IMR-90 (cell line): ENCODE measurements at regions of chr20 and their contacts with region 1.

Region 1: DNA sequence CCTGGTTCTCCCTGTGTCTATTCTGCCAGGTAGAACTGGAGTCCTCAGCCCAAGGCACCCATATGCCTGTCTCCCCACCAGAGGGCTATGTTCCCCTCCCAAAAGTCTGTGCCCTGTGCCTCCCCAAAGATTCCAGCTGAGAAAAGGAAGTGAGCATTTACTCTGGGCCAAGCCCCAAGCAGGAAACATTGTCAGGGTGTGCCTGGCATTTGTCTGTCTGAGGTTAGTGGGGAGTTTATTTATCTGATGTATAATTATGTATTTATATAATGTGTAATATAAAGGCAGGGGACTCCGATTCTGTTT is 5.6 kb downstream of the GDF5 start:
- DNase-seq: no peak
- ATAC-seq: no peak
- H3K4me3 ChIP-seq: no peak overlapping the region
- H3K27ac ChIP-seq: no peak overlapping the region
- H3K4me1 ChIP-seq: peaks cover 6% of the 10 kb centered on the region; the same call in 1 of the 2 replicates
- H3K27me3 ChIP-seq: no peaks in the 10 kb centered on the region
- CTCF ChIP-seq: no peak
- POLR2A ChIP-seq: no peak
- RAD21 ChIP-seq: no peak

Region 2: GRCh38 chr20:34834459-34834893 is 597.9 kb before region 1 on chr20:
- CTCF ChIA-PET with region 1: no interaction called
- POLR2A ChIA-PET with region 1: no interaction called
- dilution Hi-C with region 1: no loop called
- in situ Hi-C with region 1: loop called (anchors 25 kb)
- intact Hi-C with region 1: loop called (anchors 10 kb)
- DNase-seq: peak; percentile 45
- ATAC-seq: peak; percentile 80
- H3K4me3 ChIP-seq: no peak overlapping the region
- H3K27ac ChIP-seq: no peak overlapping the region
- H3K4me1 ChIP-seq: no peaks in the 10 kb centered on the region; the same call in 1 of the 2 replicates
- H3K27me3 ChIP-seq: peaks cover 15% of the 10 kb centered on the region
- CTCF ChIP-seq: peak; percentile 45
- POLR2A ChIP-seq: no peak
- RAD21 ChIP-seq: peak; percentile 60

Region 3: DNA sequence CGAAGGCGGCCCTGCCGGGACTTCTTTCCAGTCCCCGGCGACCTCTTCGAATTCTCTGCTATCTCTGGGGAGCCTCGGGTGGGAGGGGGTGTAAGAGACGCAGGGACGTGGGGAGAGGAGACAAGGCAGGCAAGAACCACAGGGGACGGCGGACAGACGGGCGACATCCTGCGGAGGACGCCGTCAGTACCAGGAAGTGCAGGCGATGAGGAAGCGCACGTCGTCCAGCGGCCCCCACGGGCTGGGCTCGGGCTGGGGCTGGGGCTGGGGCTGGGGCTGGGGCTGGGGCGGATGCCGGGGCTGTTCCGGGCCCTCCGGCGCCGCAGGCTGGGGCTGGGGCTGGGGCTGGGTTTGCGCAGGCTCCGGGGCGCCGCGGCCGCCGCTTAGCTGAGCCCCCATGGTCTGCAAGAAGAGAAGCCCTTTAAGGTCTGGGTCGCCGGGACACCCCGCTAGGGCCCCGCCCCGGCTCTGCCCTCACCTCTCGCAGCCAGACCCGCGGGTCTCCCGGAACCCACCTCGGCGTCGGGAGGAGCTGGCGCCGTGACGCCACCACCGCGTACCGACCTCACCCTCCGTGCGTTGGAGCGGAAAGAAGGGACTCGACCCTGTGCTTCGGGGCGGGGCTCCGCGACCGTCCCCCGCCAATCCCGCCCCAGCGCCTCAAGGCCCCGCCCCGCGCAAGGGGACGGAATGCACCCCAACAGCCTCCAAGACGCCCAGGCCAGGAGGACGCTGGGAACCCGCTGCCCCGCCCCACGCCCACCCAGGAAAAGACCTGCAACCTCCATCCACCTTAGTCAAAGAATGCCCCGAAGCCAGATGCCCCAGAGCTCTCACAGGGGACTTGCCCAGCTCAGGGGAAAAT is 154.6 kb before region 1 on chr20 and contains the start of gene MMP24OS:
- CTCF ChIA-PET with region 1: no interaction called
- POLR2A ChIA-PET with region 1: no interaction called
- dilution Hi-C with region 1: no loop called
- in situ Hi-C with region 1: no loop called
- intact Hi-C with region 1: loop called (anchors 10 kb)
- DNase-seq: peak; percentile 82
- ATAC-seq: peak; percentile 94
- H3K4me3 ChIP-seq: peak within 1 kb of the TSS; percentile 62
- H3K27ac ChIP-seq: peak within 1 kb of the TSS; percentile 97
- H3K4me1 ChIP-seq: peaks cover 6% of the 10 kb centered on the region
- H3K27me3 ChIP-seq: no peaks in the 10 kb centered on the region
- CTCF ChIP-seq: peak; percentile 34; the same call in 1 of the 2 replicates
- POLR2A ChIP-seq: peak; percentile 91
- RAD21 ChIP-seq: peak; percentile 37
- total RNA-seq, gene MMP24OS: 5.9 and 7.2 TPM in 2 replicates

Region 4: DNA sequence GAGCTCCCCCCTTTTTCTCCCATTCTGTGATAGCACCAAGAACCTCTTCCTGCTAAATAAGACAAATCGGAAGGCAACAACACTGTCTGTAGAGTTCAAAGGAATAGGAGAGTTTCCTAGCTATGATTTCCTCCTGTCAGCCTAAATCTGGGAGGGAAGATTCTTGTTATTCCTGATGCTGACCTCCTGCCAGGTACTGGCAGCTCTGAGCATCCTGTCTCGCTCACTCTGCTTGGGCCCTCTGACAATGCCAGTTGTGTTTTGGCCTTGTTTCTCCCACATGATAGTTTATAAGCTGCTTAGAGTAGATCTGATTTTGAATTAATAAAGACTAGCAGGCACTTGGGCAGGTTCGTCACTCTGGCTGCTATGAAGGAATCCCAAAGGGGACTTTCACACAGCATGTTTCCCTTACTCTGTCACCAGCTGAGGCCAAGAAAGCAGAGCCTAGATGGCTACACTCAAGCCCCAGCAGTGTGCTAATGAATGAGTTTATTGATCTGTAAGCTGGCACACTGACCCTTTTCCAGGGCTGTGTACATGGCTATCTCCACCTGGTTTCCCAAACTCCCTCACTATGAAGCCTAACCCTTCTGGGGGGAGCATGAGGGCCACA is 72.9 kb before region 1 on chr20:
- CTCF ChIA-PET with region 1: no interaction called
- POLR2A ChIA-PET with region 1: no interaction called
- dilution Hi-C with region 1: no loop called
- in situ Hi-C with region 1: no loop called
- intact Hi-C with region 1: loop called (anchors 10 kb)
- DNase-seq: no peak
- ATAC-seq: no peak
- H3K4me3 ChIP-seq: no peak overlapping the region
- H3K27ac ChIP-seq: no peak overlapping the region
- H3K4me1 ChIP-seq: peaks cover 5% of the 10 kb centered on the region; the same call in 1 of the 2 replicates
- H3K27me3 ChIP-seq: no peaks in the 10 kb centered on the region
- CTCF ChIP-seq: no peak
- POLR2A ChIP-seq: no peak
- RAD21 ChIP-seq: no peak

Region 5: GRCh38 chr20:35410613-35411012 is 21.8 kb before region 1 on chr20:
- CTCF ChIA-PET with region 1: no interaction called
- POLR2A ChIA-PET with region 1: interaction called, 15 read pairs
- dilution Hi-C with region 1: no loop called
- in situ Hi-C with region 1: no loop called
- intact Hi-C with region 1: no loop called
- DNase-seq: no peak
- ATAC-seq: no peak
- H3K4me3 ChIP-seq: peak overlapping the region; percentile 82; the same call in 1 of the 2 replicates
- H3K27ac ChIP-seq: no peak overlapping the region
- H3K4me1 ChIP-seq: no peaks in the 10 kb centered on the region
- H3K27me3 ChIP-seq: no peaks in the 10 kb centered on the region
- CTCF ChIP-seq: no peak
- POLR2A ChIP-seq: no peak
- RAD21 ChIP-seq: no peak